AG04450 (cell line): ENCODE measurements at regions of chr9 and their contacts with region 1.

Region 1: DNA sequence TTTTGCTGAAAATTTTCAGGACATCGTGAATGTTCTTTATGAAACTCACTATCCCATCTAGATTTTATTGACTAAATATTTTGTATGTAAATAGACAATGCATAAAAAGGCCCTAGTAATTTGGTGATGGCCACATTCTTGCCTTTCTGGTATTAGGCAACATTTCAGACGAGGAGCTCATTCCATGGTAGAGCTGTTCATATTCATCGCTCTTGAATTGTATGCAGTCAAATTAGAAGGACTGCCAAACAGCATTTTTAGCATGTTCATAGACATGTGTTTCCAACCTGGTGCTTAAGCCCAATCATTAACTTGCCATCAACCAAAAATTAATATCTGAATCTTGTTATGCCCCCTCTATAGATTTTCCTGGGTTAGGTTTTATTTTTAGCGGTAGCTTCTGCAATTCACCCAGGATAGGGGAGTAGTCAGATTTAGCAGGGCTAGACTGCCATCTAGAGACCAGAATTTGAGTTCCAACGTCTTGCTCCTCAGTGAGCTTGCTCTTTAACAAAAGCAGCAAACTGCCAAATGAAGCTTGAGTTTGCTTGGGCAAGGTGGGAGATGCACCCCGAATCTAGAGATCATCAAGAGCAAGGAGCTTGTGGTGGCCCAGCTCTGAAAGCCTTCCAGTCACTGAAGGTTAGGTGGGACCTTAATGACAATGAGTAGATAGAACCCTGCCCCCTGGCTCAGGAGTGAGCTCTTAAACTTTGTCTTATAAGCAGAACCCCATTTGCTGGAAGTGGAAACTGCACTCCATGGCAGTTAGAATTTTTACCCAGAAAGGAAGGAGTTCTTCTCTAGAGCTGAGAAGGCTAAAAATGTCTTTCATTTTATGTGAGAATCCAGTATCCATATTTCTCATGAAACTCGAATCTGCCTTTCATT is 456.2 kb downstream of the RASEF start:
- DNase-seq: no peak
- H3K4me3 ChIP-seq: no peak overlapping the region
- H3K27ac ChIP-seq: no peak overlapping the region
- H3K27me3 ChIP-seq: no peaks in the 10 kb centered on the region
- CTCF ChIP-seq: peak; percentile 77

Region 2: DNA sequence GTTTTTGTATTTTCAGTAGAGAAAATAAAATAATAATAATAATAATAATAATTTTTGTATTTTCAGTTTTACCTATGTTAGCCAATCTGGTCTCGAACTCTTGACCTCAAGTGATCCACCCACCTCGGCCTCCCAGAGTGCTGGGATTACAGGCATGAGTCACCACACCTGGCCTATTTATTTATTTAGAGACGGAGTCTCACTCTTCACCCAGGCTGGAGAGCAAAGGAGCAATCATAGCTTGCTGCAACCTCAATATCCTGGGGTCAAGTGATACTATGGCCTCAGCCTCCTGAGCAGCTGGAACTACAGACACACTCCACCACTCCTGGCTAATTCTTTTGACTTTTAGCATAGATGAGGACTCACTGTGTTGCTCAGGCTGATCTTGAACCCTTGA is 1084.8 kb before region 1 on chr9:
- CTCF ChIA-PET with region 1: interaction called, 22 read pairs
- POLR2A ChIA-PET with region 1: no interaction called
- DNase-seq: no peak
- H3K4me3 ChIP-seq: no peak overlapping the region
- H3K27ac ChIP-seq: no peak overlapping the region
- H3K27me3 ChIP-seq: no peaks in the 10 kb centered on the region
- CTCF ChIP-seq: no peak

Region 3: DNA sequence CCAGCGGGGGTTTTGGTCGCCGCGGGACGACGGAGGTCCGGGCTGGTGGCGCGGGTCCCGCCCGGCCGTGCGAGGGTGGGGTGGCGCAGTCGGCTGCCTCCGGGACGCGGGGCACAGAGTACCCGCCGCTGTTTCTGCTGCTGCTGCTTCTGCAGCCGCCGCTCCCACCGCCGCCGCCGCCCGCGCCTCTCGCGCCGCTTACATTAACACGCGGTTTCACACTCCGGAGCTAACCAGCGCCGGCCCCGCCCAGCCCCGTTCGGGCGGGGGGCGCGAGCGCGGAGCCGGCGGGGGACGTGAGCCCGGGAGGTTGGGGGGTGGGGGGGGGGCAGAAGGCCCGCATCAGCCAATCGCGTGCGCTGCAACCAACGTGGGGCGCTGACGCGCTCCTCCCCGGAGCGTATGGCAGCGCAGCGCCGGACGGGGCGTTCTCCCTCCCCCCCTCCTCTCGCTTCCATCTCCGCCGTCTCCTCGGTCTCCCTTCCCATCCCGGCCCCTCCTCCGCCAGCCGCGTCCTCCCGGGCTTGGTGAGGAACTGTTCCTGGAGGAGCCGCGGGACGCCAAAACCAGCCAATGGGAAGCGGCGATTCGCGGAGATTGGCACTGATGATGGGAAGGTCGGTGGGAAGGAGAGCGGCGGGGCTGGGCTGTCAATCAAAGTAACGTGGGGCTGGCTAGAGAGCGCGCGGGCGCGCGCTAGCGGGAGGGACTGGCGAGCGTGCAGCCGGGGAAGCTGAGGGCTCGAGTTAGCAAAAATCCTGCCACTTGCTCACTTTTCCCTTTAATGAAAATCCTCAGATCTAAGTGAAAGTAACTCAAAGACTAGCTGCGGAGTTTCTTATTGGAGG is 917.2 kb before region 1 on chr9 and contains the start of gene TLE1:
- CTCF ChIA-PET with region 1: interaction called, 22 read pairs
- POLR2A ChIA-PET with region 1: interaction called, 6 read pairs
- DNase-seq: peak; percentile 100
- H3K4me3 ChIP-seq: peak within 1 kb of the TSS; percentile 86
- H3K27ac ChIP-seq: peak within 1 kb of the TSS; percentile 71
- H3K27me3 ChIP-seq: no peaks in the 10 kb centered on the region
- CTCF ChIP-seq: 0 out of 2 replicates have a peak, but pooled peaks have one; percentile 7
- polyA plus RNA-seq, gene TLE1: 42.8 and 44.0 TPM in 2 replicates

Region 4: DNA sequence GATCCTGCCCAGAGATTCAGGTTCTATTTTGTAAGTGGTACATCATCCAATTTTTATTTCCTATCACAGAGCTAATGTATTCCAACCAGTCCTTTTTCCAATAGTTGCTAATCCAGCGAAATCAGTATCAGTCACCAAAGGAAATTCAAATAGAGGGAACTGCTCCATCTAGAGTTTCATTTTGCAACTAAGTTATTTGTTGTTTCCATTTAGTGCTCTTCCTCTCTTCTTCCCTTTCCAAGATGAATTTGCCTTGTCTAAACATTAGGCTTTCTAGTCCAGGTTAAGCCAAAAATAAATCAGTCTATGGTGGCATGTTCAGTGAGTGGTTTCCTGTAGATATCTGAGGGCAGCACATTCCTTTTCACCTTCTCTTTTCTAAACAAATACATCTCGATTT is 758.3 kb before region 1 on chr9:
- CTCF ChIA-PET with region 1: interaction called, 33 read pairs
- POLR2A ChIA-PET with region 1: no interaction called
- DNase-seq: no peak
- H3K4me3 ChIP-seq: no peak overlapping the region
- H3K27ac ChIP-seq: no peak overlapping the region
- H3K27me3 ChIP-seq: no peaks in the 10 kb centered on the region
- CTCF ChIP-seq: peak; percentile 59

Region 5: GRCh38 chr9:82332018-82332773 is 274.5 kb before region 1 on chr9:
- CTCF ChIA-PET with region 1: interaction called, 10 read pairs
- POLR2A ChIA-PET with region 1: no interaction called
- DNase-seq: peak; percentile 60
- H3K4me3 ChIP-seq: no peak overlapping the region
- H3K27ac ChIP-seq: peak overlapping the region; percentile 54
- H3K27me3 ChIP-seq: no peaks in the 10 kb centered on the region
- CTCF ChIP-seq: no peak

Region 6: GRCh38 chr9:82532504-82533180 is 74.1 kb before region 1 on chr9:
- CTCF ChIA-PET with region 1: interaction called, 37 read pairs
- POLR2A ChIA-PET with region 1: no interaction called
- DNase-seq: no peak
- H3K4me3 ChIP-seq: no peak overlapping the region
- H3K27ac ChIP-seq: no peak overlapping the region
- H3K27me3 ChIP-seq: no peaks in the 10 kb centered on the region
- CTCF ChIP-seq: peak; percentile 34; the same call in 1 of the 2 replicates

Region 7: GRCh38 chr9:82538634-82539033 is 68.1 kb before region 1 on chr9:
- CTCF ChIA-PET with region 1: interaction called, 37 read pairs
- POLR2A ChIA-PET with region 1: no interaction called
- DNase-seq: no peak
- H3K4me3 ChIP-seq: no peak overlapping the region
- H3K27ac ChIP-seq: no peak overlapping the region
- H3K27me3 ChIP-seq: no peaks in the 10 kb centered on the region
- CTCF ChIP-seq: no peak